Prostate gland (tissue), 2 donors: ENCODE measurements at regions of chrX and their contacts with region 1.

Region 1: GRCh38 chrX:74536152-74536831 is 78.1 kb downstream of the RLIM start:
- DNase-seq: peak; percentile 58
- H3K4me3 ChIP-seq: peak overlapping the region; percentile 27 to 39
- H3K27ac ChIP-seq: peak overlapping the region; percentile 75 to 77
- H3K4me1 ChIP-seq: no peaks in the 10 kb centered on the region
- H3K27me3 ChIP-seq: no peaks in the 10 kb centered on the region
- CTCF ChIP-seq: peak in 2 of 4 experiments; percentile 8 to 36
- POLR2A ChIP-seq: peak; percentile 46

Region 2: GRCh38 chrX:74382613-74383012 is 153.7 kb before region 1 on chrX:
- intact Hi-C with region 1: loop called (anchors 5 kb)
- DNase-seq: peak; percentile 31
- H3K4me3 ChIP-seq: no peak overlapping the region
- H3K27ac ChIP-seq: no peak overlapping the region
- H3K4me1 ChIP-seq: no peaks in the 10 kb centered on the region
- H3K27me3 ChIP-seq: no peaks in the 10 kb centered on the region
- CTCF ChIP-seq: peak in 3 of 4 experiments; percentile 49 to 63 (median 54)
- POLR2A ChIP-seq: no peak

Region 3: GRCh38 chrX:74421036-74421739 is 115.1 kb before region 1 on chrX and contains the start of gene SLC16A2:
- intact Hi-C with region 1: loop called (anchors 10 kb)
- DNase-seq: peak; percentile 69
- H3K4me3 ChIP-seq: peak within 1 kb of the TSS; percentile 37 to 41
- H3K27ac ChIP-seq: peak within 1 kb of the TSS; percentile 91 to 93
- H3K4me1 ChIP-seq: no peaks in the 10 kb centered on the region
- H3K27me3 ChIP-seq: no peaks in the 10 kb centered on the region
- CTCF ChIP-seq: no peak
- POLR2A ChIP-seq: peak; percentile 23
- total RNA-seq, gene SLC16A2: 8.7 to 9.3 TPM